RWPE1 (cell line): ENCODE measurements at regions of chr11 and their contacts with region 1.

Region 1: GRCh38 chr11:61332797-61333549 is at the starts of genes DDB1 and TKFC:
- DNase-seq: peak; percentile 96
- H3K27ac ChIP-seq: peak within 1 kb of the TSS; percentile 84
- CTCF ChIP-seq: no peak

Region 2: GRCh38 chr11:61120706-61121191 is 212.2 kb before region 1 on chr11:
- CTCF ChIA-PET with region 1: no interaction called
- POLR2A ChIA-PET with region 1: no interaction called
- DNase-seq: no peak
- H3K27ac ChIP-seq: no peak overlapping the region
- CTCF ChIP-seq: no peak

Region 3: DNA sequence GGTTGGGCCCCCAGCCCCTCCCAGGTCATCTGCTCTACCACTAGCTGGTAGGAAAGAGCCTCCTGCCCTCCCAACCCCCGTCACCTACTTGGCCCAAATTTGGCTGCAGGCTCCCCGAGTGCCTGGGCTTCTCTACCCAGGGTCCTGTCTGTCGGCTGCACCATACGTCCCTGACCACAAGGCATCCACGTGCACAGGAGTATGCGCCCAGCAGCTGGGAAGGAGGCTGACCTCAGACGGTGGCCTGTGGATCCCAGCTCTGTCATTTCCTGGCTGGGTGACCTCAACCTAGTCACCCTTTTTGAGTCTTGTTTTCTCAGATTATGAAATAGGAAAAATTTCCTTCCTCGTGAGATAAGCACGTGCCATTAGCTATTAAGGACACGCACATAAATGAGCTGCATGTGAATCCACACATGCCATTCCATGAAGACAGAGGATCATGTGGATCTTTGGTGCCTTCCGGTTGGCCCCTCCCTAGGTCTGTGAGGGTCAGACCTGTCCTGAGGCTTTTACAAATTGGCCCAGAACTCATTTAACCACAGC is 15.0 kb after region 1 on chr11:
- CTCF ChIA-PET with region 1: interaction called, 13 read pairs
- POLR2A ChIA-PET with region 1: no interaction called
- DNase-seq: no peak
- H3K27ac ChIP-seq: peak overlapping the region; percentile 52
- CTCF ChIP-seq: no peak

Region 4: DNA sequence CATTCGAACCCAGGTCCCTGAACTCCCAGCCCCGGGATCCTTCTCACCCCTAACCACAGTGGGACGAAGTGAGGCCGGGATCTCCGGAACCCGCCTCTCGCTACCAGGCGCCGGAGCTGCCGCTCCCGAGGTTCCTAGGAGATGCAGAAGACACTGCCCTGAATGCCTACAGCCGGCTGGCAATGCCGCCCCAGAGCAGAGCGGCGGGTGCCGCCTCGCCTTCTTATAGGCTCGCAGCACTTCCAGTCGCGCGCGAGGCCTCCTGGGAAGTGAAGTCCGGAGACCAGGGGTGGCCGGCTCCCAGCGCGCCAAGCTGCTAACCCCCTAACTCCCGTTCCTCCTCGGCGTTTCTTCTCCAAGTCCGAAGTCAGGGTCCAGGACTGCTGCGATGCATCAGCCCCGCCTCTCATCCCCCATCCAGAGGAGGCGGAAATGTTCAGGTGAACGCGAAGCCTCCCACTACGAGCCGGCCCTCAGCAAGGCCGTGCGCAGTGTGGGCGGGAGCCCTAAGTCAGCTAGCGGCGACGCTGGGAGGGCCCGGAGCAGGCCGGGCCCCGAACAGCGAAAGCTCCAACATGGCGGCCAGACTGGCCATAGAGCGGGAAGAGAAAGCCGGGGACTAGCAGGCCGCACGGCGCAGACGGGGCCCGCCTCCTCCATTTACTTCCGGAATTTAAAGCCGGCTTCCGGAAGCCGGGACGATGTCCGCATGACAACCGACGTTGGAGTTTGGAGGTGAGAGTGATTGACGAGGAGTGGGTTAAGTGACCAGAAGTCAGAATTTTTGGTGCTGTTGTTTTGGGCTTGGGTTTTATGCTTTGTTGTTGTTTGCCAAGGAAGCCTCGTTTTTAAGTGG is 28.9 kb after region 1 on chr11 and contains the starts of genes CYB561A3 and TMEM138:
- CTCF ChIA-PET with region 1: interaction called, 11 read pairs
- POLR2A ChIA-PET with region 1: interaction called, 11 read pairs
- DNase-seq: peak; percentile 95
- H3K27ac ChIP-seq: peak within 1 kb of the TSS; percentile 99
- CTCF ChIP-seq: no peak

Region 5: GRCh38 chr11:61384271-61385242 is 51.6 kb after region 1 on chr11:
- CTCF ChIA-PET with region 1: interaction called, 86 read pairs
- POLR2A ChIA-PET with region 1: interaction called, 6 read pairs
- DNase-seq: no peak
- H3K27ac ChIP-seq: peak overlapping the region; percentile 59
- CTCF ChIP-seq: no peak

Region 6: DNA sequence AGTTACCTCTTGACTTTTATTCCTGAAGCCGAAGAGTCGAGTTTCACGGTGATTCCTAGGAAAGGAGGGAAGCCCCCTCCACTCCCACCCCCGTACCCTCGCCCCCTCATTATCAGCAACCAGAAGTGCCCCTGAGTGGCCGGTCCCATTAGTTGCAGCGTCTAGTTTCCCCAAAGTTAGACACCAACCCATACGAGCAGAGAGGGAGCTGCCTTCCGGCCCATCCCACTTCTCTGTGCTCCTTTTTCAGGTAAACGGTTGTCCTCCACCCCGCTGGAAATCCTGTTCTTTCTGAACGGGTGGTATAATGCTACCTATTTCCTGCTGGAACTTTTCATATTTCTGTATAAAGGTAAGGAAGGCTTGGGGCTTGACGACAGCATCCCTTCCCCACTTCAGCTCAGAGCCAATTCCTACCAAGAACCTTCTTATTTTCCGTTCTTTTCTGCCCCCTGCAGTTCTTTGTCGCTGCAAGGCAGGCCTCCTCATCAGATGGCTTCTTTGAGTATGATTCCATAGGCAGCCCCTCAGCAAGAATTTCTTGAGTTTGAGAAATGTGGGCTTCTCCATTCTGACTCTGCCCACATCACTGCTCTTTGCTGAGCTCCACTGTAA is 60.1 kb after region 1 on chr11:
- CTCF ChIA-PET with region 1: interaction called, 10 read pairs
- POLR2A ChIA-PET with region 1: no interaction called
- DNase-seq: peak; percentile 46
- H3K27ac ChIP-seq: peak overlapping the region; percentile 83
- CTCF ChIP-seq: peak; percentile 23; the same call in 1 of the 2 replicates